Activated CD8-positive, alpha-beta T cell treated with anti-CD3 and anti-CD28 coated beads, Interleukin-2, amount 10 ng/mL, durations not matched to agents 7 days and 5 days (primary cell): ENCODE measurements at regions of chr22 and their contacts with region 1.

Region 1: DNA sequence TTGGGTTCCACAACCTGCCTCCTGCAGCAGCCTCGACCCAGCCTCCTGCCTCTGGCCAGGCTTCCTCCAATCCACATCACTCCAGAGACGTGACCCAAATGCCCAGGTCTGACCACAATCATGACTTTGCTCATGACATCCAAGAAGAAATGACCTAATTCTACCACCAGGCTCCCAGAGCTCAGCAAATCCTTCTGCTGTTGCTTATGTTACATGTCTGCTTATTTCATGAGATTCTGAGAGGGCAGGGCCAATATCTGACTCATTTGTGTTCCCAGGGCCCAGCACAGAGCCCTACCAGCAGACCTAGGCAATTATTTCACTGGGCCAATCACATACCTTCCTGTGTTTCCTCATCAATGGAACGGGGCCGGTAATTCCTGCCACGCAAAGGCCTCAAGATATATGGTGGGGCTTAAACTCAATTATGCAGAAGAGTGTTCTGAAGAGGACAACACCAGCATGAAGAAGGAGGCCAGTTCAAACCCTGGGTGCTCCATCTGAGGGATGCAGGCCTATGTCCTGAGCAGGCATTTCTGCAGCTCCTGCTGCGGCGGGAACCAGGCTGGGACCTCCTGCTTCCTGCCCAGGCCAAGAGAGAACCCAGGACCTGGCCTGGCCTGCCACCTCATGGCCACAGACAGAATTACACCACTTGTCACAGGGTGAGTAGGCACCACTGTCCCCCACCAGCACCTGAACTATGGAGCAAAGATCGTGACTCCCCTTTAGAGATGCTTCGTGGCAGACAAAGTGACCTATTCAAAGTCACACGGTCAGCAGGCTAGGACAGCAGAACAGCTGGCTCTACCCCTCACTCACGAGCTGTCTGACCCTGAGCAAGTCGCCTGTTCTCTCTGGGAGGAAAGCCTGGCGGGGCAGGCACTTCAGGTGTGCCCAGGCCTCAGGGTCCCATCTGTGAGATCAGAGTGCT is 5.9 kb downstream of the CENPM start:
- DNase-seq: peak; percentile 90
- ATAC-seq: peak; percentile 61
- H3K4me3 Mint-ChIP-seq: peak overlapping the region; percentile 27
- H3K27ac Mint-ChIP-seq: peak overlapping the region; percentile 95
- H3K4me1 Mint-ChIP-seq: peaks cover 58% of the 10 kb centered on the region
- H3K27me3 Mint-ChIP-seq: no peaks in the 10 kb centered on the region

Region 2: DNA sequence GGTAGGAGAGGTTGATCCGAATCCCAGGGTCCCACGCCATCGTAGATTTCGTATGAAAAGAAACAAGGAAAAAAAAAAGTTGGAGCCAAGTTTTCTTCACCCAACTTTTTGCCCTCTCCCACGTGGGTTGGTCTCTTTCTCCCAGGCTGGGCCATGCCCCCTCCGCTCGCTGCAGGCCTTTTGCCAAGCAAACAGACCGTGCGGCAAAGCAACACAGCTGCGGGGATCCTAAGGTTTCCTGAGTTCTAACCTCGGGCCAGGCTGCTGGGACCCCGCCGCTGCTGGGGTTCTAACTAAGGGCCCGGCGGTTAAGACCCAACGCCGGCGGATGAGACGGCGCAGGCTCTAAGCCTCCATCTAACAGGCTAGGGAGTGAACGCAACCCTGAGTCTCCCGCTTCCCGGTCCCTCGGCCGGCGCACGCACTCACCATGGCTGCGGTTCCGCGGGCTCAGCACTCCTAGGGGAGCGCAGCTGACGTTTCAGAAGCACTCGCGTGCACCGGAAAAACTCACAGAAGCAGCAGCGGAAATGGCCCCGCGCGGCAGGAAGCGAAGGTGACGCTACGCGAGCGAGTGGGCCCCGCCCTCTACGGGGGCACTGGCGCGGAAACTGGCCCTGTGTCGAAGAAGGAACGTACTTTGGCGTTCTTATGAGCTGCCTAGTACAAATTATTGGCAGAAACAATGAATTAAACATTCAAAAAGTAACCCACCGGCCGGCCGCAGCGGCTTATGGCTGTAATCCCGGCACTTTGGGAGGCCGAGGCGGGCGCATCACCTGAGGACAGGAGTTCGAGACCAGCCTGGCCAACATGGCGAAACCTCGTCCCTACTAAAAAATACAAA is 252.5 kb before region 1 on chr22 and contains the start of gene SNU13:
- CTCF ChIA-PET with region 1: interaction called, 16 read pairs
- POLR2A ChIA-PET with region 1: interaction called, 13 read pairs
- DNase-seq: peak; percentile 96
- ATAC-seq: peak; percentile 94
- H3K4me3 Mint-ChIP-seq: peak within 1 kb of the TSS; percentile 88
- H3K27ac Mint-ChIP-seq: peak within 1 kb of the TSS; percentile 99
- H3K4me1 Mint-ChIP-seq: peaks cover 34% of the 10 kb centered on the region
- H3K27me3 Mint-ChIP-seq: no peaks in the 10 kb centered on the region
- total RNA-seq, gene SNU13: 185 to 200 TPM

Region 3: DNA sequence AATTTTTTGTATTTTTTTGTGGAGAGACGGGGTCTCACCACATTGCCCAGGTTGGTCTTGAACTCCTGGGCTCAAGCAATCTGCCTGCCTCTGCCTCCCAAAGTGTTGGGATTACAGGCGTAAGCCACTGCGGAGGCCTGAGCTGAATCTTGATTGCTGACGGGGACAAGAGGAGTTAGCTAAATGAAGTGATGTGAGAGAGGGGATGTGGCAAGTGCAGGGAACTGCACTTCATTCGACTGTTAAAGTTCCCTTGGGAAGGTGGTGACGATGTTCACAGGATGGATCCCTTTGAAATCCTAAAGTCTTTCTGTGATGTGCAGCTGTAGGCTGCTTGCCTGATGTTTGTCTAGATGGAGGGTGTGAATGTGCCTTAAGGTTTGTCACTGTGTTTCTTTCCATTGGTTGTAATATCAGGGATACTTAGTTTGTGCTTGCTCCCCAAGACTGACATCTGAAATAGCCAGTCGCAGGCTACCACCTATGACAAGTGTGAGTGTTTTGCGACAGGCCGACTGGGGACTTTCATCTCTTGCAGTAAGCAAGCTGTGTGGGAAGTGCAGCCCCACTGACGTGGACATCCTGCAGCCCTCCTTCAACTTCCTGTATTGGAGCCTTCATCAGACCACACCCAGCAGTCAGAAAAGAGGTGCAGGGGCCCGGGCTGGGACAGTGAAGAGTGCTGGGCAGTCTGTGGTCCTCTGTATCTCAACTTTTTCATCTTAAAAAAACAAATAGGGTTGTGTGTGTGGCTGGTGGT is 160.2 kb before region 1 on chr22:
- CTCF ChIA-PET with region 1: interaction called, 19 read pairs
- POLR2A ChIA-PET with region 1: interaction called, 9 read pairs
- DNase-seq: peak; percentile 97
- ATAC-seq: peak; percentile 97
- H3K4me3 Mint-ChIP-seq: peak overlapping the region; percentile 87
- H3K27ac Mint-ChIP-seq: peak overlapping the region; percentile 99
- H3K4me1 Mint-ChIP-seq: peaks cover 40% of the 10 kb centered on the region
- H3K27me3 Mint-ChIP-seq: no peaks in the 10 kb centered on the region

Region 4: DNA sequence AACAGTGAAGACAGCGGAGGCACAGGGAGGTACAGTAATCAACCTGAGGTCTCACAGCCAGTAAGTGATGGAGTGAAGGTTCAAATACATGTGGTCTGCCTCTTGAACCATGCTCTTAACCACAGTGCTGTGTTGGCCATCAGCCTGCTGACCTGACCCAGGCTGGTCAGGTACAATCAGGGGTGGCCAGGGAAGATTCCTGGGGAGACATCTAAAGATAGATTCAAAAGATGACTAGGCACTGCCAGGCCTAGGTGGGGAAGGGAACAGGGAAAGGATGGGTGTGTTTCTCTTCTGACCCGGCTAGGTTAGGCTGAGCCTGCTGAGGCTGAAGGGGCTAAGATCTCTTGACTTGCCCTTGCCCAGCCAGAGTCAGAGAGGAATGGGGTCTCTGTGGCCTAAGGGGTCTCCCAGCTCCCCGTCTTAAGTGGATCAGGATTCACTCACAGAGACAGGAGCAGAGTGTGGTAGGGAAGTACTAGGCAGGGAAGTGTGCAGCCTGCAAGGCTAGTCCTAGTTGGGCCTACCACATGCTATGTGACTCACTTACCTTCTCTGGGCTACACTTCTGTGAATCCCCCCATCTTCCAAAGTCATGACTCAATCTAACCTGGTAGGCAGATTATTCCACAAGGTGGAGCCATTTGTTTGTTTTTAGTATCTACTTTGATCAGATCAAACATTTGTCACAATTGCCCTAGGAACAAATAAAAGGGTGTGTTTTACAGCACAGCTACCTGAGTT is 118.6 kb before region 1 on chr22:
- CTCF ChIA-PET with region 1: interaction called, 10 read pairs
- POLR2A ChIA-PET with region 1: interaction called, 4 read pairs
- DNase-seq: peak; percentile 53
- ATAC-seq: peak; percentile 81
- H3K4me3 Mint-ChIP-seq: no peak overlapping the region
- H3K27ac Mint-ChIP-seq: peak overlapping the region; percentile 66
- H3K4me1 Mint-ChIP-seq: peaks cover 19% of the 10 kb centered on the region
- H3K27me3 Mint-ChIP-seq: no peaks in the 10 kb centered on the region

Region 5: DNA sequence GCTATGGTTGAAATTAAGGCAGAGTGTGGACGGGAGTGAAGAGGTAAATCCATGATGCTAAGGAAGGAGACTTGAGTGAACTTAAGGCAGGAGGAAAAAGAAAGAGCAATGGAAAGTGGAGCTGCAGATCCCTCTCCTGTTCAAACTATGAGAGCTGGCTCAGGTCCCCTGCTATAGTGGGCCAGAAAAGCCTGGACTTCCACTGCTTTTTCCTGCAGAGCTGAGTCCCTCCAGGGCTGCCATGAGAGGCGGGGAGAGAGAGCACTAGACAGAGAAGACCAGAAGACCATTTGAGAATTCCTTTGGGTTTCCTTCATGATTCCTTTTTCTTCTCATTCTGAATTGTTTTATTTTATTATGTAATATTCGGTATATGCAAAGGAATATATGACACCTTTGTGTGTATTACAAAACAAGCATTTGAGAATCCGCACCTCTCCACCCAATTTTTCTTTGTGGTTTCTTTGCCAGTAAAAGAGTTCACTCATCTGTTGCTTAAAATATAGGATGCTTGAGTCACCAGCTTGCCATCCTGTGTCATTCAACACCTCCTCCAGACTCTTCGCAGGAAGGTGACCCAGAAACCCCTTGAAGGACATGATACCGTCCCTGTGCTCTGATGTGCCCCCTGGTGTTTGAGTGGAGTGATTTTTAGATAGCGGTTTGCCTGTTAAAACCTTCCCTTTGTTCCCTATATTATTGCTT is 83.8 kb before region 1 on chr22:
- CTCF ChIA-PET with region 1: interaction called, 15 read pairs
- POLR2A ChIA-PET with region 1: no interaction called
- DNase-seq: peak; percentile 79
- ATAC-seq: peak; percentile 71
- H3K4me3 Mint-ChIP-seq: peak overlapping the region; percentile 12
- H3K27ac Mint-ChIP-seq: peak overlapping the region; percentile 31
- H3K4me1 Mint-ChIP-seq: peaks cover 61% of the 10 kb centered on the region
- H3K27me3 Mint-ChIP-seq: no peaks in the 10 kb centered on the region

Region 6: DNA sequence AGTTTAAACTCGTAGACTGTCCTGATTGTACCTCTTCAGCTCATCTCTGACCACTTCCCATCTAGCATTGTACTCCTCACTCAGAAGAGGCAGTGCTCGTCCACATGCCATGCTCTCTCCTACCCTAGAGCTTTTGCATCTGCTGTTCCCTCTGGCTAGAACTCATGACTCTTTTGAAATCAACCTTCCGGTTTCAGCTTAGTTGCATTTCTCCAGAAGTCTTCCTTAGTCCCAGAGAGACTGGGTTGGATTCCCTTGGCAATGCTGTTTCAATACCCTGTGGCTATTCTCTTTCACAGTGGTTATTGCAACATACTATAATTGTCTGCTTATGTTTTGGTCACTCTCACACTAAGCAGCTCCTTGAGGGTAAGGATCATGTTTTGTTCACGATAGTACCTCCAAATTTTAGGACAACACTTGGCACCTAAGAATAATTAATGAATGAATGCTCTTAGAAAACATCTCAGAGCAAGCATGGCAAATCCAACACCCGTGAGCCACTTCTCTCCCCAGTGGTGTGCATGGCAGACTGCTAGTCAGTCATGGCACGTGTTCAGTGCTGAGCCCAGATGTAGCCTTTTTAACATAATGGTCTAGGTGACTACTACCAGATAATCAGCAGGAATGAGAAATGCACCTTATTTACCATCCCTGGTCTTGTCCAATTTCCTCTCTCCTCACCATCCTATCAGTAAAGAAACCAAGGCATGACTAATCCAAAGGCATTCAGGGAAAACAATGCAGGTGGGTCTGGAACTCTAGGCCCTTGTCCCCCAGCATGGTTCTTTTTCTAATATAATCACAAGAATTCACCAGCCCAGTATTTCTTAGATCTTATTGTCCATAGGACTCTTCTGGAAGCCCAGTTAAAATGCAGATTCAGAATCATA is 42.7 kb after region 1 on chr22:
- CTCF ChIA-PET with region 1: no interaction called
- POLR2A ChIA-PET with region 1: no interaction called
- DNase-seq: no peak
- ATAC-seq: no peak
- H3K4me3 Mint-ChIP-seq: no peak overlapping the region
- H3K27ac Mint-ChIP-seq: no peak overlapping the region
- H3K4me1 Mint-ChIP-seq: no peaks in the 10 kb centered on the region
- H3K27me3 Mint-ChIP-seq: peaks cover 21% of the 10 kb centered on the region